ENCODE measurements at regions of chr18 and their contacts with region 1.

Region 1: GRCh38 chr18:31741097-31741735 is 19.5 kb downstream of the SLC25A52 start:
- DNase-seq: peak in 4 of 10 donors; percentile 25 to 45 (median 31)

Region 2: GRCh38 chr18:31162419-31162793 is 578.8 kb before region 1 on chr18:
- intact Hi-C with region 1: no loop called
- DNase-seq: peak in 2 of 10 donors; percentile 70 to 72

Region 3: DNA sequence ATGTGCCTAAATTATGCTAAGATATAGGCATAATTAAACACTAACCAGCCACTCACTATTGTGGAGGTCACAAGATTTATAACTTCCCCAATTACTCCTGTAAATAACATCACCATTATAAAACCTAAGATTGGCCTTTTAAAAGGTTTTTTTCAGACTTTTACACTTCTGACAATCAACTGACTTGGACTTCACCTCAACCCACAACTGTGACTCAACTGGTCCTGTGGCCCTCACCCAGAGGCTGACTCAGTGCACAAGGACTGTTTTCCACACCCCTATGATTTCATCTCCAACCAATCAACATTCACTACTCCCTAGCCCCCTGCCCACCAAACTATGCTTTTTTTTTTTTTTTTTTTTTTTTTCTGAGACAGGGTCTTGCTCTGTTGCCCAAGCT is 137.9 kb before region 1 on chr18:
- intact Hi-C with region 1: no loop called
- DNase-seq: no peak

Region 4: GRCh38 chr18:31819106-31819924 is 78.1 kb after region 1 on chr18:
- intact Hi-C with region 1: loop called (anchors 5 kb)
- DNase-seq: no peak

Region 5: DNA sequence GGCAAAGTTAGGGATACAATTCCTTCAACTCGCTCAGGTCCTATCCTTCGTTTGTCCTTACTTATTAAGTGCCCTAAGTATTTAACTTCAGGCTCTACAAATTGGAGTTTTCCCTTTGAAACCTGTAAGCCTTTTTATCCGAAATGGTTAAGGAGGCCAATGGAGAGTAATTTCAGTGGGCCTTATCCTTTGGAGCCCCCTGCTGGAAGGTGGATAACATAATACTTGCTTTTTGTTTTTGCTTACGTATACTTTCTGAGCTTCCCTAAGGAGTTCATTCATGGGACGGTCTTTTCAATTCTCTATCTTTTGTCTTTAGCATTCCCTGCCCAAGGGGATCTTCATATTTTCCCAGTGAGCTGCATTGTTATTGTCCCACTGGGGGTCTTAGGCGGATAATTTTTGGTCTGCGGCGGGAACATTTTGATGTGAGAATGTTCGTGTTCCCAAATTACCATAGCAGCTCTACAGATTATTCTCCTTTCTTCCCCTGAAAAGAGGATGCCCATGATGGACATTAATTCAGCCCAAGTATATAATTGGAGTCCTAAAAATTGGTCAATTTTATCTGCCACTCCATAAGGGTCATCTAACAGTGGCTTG is 236.2 kb after region 1 on chr18:
- intact Hi-C with region 1: loop called (anchors 2 kb)
- DNase-seq: peak in 3 of 10 donors; percentile 24 to 59 (median 31)

Measured in posterior cingulate gyrus (tissue), 11 donors.